Lower lobe of right lung (tissue), 2 donors: ENCODE measurements at regions of chr7 and their contacts with region 1.

Region 1: DNA sequence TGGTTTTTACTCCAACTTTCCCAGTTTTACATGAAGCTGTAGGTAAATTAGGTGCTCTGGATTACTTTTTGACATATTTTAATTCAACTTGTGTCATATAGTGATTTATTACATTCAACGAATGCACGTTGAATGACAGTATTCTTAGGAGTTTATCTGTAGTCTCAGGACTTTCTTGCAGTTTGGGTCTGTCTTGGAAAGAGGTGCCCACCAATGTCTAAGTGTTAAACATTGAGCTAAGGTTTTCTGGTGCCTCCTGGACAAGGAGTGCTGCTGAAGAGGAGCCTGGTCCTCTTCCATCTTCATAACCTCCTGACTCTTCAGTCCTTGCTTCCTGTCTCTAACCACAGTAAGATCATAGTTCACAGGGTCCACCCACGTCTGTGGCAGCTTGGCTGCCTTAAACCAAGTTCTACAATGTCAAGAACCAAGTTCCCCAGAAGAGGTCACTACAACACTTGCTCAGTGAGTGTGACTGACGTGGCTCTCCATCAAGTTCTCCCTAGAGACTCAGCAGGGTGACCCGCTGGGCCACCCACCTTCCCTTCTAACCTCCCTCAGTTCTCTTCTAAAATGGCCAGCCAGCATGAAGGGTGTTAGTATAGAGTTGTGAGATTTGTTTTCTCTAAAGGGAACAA is 6.1 kb downstream of the NPY start:
- DNase-seq: no peak
- ATAC-seq: peak; percentile 88
- H3K4me3 ChIP-seq: no peak overlapping the region
- H3K27ac ChIP-seq: no peak overlapping the region
- H3K4me1 ChIP-seq: no peaks in the 10 kb centered on the region
- H3K27me3 ChIP-seq: peaks cover 7% of the 10 kb centered on the region
- CTCF ChIP-seq: peak; percentile 38

Region 2: DNA sequence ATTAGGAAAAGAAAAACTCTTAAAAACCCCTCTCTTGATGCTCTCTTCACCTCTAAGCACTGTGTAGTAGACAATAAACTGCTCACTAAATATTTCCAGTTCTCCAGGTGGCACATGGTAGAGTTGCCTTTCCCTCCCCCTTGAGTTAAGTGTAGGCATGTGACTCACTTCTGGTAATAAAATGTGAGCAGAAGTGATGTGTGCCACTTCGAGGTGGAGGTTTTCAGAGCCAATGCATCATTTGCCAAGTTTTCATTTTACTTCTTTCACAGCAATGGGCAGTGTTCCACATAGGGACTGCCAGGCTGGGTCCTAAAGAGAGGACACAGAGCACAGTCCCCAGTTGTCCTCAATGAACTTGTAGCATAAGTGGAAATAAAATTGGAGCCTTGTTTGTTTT is 137.8 kb before region 1 on chr7:
- intact Hi-C with region 1: no loop called
- DNase-seq: no peak
- ATAC-seq: peak; percentile 36 to 61
- H3K4me3 ChIP-seq: no peak overlapping the region
- H3K27ac ChIP-seq: no peak overlapping the region
- H3K4me1 ChIP-seq: no peaks in the 10 kb centered on the region
- H3K27me3 ChIP-seq: no peaks in the 10 kb centered on the region
- CTCF ChIP-seq: no peak

Region 3: GRCh38 chr7:24501009-24501408 is 210.9 kb after region 1 on chr7:
- intact Hi-C with region 1: no loop called
- DNase-seq: no peak
- ATAC-seq: no peak
- H3K4me3 ChIP-seq: no peak overlapping the region
- H3K27ac ChIP-seq: no peak overlapping the region
- H3K4me1 ChIP-seq: no peaks in the 10 kb centered on the region
- H3K27me3 ChIP-seq: no peaks in the 10 kb centered on the region
- CTCF ChIP-seq: no peak

Region 4: DNA sequence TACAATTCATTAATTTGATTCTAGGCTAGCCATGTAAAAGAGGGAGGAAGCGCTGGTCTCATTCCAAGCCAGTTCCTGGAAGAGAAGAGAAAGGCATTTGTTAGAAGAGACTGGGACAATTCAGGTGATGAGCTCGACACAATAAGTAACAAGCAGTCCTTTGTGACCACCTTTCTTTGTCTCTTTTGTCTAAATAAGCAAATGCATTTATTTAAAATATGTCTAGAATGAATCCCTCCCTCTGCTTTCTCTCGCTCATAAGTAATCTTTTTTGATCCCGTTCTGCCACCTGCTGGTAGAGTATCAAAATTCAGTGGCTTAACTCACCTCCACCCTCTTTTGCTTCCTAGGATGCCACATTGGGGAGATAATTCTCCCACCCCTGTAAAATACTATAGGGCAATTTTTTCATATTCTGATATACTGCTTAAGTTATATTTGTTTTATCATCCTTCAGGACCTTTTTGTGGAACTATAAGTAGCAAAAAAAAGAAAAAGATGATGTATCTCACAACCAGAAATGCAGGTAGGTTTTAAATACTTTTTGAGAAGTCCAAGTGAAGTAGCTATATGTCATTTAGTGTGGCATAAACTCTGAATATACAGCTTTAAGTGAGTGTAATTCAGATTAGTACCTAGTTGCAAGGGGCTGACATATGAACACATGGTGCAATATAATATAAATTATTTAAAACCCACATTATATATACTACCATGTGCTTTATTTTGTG is 375.6 kb after region 1 on chr7:
- intact Hi-C with region 1: loop called (anchors 10 kb)
- DNase-seq: no peak
- ATAC-seq: peak in 1 of 2 donors; percentile 65
- H3K4me3 ChIP-seq: no peak overlapping the region
- H3K27ac ChIP-seq: no peak overlapping the region
- H3K4me1 ChIP-seq: no peaks in the 10 kb centered on the region
- H3K27me3 ChIP-seq: no peaks in the 10 kb centered on the region
- CTCF ChIP-seq: peak; percentile 72